Tibial artery (tissue), 4 donors: ENCODE measurements at regions of chr1 and their contacts with region 1.

Region 1: GRCh38 chr1:64121766-64122385 is 81.5 kb upstream of the UBE2U start:
- DNase-seq: no peak
- H3K4me3 ChIP-seq: no peak overlapping the region
- H3K27ac ChIP-seq: no peak overlapping the region
- H3K4me1 ChIP-seq: peaks cover 0 to 46% (median 15%) of the 10 kb centered on the region in 4 donors
- H3K27me3 ChIP-seq: no peaks in the 10 kb centered on the region
- CTCF ChIP-seq: no peak

Region 2: GRCh38 chr1:64033667-64034220 is 88.1 kb before region 1 on chr1:
- intact Hi-C with region 1: no loop called
- DNase-seq: peak in 1 of 2 donors; percentile 46
- H3K4me3 ChIP-seq: no peak overlapping the region
- H3K27ac ChIP-seq: peak overlapping the region; percentile 27 to 83
- H3K4me1 ChIP-seq: peaks cover 0 to 74% (median 42%) of the 10 kb centered on the region in 4 donors
- H3K27me3 ChIP-seq: no peaks in the 10 kb centered on the region
- CTCF ChIP-seq: no peak

Region 3: DNA sequence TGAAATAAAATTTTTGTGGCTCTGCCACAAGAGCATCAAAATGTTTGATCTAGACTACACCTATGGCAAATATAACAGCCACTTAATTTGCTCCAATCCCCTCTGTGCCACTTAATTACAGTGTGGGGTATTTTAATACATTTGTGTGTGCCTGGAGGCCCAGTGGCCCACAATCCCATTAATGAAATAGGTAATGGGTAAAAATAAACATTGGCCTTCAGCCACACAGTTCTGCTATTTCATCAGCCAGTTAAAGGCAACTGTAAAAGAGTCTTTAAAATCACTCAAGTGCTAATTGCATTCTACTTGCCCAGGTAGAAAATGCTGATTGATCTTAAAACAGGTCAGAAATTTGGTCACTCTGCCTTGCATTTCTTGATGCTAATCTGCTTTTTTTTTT is 70.1 kb before region 1 on chr1:
- intact Hi-C with region 1: loop called (anchors 10 kb)
- DNase-seq: no peak
- H3K4me3 ChIP-seq: no peak overlapping the region
- H3K27ac ChIP-seq: no peak overlapping the region
- H3K4me1 ChIP-seq: peaks cover 0 to 42% (median 2%) of the 10 kb centered on the region in 4 donors
- H3K27me3 ChIP-seq: no peaks in the 10 kb centered on the region
- CTCF ChIP-seq: no peak

Region 4: GRCh38 chr1:64282354-64282753 is 160.5 kb after region 1 on chr1:
- intact Hi-C with region 1: no loop called
- DNase-seq: no peak
- H3K4me3 ChIP-seq: no peak overlapping the region
- H3K27ac ChIP-seq: no peak overlapping the region
- H3K4me1 ChIP-seq: no peaks in the 10 kb centered on the region
- H3K27me3 ChIP-seq: no peaks in the 10 kb centered on the region
- CTCF ChIP-seq: no peak

Region 5: DNA sequence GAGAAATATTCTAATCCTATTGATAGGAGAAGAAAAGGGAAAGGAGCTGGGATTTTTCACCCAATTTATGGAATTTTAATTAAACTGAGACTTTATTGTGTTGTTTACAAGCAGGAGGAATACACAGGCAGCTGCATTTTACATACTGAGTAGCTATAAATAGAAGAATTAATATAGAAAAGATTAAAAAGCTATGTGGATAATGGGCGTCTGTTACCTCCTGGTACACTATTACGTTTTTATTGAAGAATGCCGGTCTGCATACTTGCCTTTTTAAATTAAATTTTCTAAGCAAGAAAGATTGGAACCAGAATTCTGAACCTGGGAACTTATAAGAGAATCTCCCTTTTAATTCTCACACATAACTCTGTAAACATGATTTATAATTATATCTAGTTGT is 295.9 kb after region 1 on chr1:
- intact Hi-C with region 1: no loop called
- DNase-seq: no peak
- H3K4me3 ChIP-seq: no peak overlapping the region
- H3K27ac ChIP-seq: no peak overlapping the region
- H3K4me1 ChIP-seq: no peaks in the 10 kb centered on the region
- H3K27me3 ChIP-seq: no peaks in the 10 kb centered on the region
- CTCF ChIP-seq: no peak